ENCODE measurements at regions of chr22 and their contacts with region 1.

Region 1: DNA sequence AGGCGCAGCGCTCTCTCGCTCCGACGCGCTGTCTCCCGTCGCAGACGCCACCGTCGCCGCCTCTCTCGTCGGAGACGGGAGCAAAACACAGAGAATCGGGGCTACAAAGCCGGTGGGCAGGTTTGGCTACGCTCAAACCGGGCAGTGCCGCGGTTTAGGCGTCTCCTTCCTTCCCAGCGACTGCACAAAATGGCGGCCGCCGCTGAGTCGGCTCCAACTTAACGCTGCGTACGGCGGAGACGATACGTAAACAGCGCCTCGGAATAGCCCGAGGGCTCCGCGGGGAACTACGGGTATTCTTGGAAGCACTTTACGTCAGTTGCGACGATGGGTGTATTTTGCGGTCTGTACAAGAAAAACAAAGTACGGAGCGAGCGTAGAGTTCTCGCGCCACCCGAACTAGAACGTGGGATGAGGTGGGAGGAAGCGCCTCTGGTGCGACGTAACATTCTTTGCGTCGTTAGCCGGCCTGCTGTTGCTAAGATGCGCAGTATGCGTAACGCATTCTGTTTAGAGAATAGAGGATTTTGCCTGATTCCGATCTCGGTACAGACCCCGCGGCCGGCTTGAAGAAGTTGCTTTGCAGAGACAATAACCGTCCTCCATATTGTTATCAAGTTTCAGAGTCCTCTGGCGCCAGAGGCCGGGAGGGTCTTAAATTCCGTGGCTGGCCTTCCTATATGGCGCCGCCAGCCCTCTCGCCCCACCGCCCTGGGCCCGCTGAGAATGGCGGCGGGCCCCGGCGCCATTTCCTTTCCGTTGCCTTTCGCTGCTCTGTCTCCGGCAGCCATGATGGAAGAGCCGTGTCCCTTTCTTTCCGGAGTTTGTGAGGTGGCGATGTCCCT is at the start of gene DDX17:
- DNase-seq: peak; percentile 95
- ATAC-seq: peak; percentile 89
- H3K4me3 Mint-ChIP-seq: peak within 1 kb of the TSS; percentile 89
- H3K27ac Mint-ChIP-seq: peak within 1 kb of the TSS; percentile 100
- H3K4me1 Mint-ChIP-seq: peaks cover 36% of the 10 kb centered on the region
- H3K27me3 Mint-ChIP-seq: no peaks in the 10 kb centered on the region
- total RNA-seq, gene DDX17: 259 to 328 TPM

Region 2: DNA sequence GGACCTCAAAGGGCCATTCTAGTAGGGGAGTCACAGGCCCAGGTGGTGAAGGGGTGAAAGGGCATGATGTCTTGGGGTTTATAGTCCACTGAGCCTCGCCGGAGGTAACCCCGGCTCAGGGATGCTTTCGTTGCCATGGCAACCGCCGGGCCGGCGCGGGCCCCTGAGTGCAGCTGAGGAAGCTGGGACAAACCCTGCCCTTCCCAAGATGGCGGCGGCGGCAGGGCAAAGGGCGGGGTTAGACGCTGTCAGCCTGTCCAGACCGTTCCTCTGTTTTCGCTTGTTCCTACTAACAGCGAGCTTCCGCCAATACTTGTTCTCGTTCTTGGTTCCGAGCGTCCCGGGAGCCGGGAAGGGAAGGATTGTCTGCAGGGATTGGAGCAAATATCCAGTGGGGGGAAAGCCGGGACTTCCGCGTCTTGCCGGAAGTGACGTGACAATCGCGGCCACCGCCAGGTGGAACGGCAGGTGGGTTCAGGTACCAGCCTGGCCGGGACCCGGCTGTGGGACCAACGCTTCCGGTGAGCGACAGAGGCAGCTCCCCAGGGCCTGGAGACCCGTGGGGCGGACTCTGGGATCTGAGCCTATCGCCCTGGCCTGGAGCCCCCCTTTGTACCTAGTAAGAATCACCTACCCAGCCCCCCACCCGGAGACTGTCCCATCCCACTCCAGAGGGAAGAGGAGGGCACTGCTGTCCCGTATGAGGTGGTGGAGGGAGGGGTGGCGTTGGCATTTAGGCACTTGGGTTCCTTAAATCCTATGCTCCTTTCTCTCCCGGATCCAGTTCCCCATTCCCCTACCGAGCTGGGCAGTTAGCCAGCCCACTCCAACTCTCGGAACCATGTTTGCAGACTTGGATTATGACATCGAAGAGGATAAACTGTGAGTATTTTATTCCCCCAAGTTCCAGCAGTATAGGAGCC is 449.1 kb before region 1 on chr22 and contains the start of gene PICK1:
- CTCF ChIA-PET with region 1: interaction called, 5 read pairs
- POLR2A ChIA-PET with region 1: no interaction called
- intact Hi-C with region 1: loop called in 1 of 2 experiments (anchors 2 kb)
- DNase-seq: peak; percentile 92
- ATAC-seq: peak; percentile 93
- H3K4me3 Mint-ChIP-seq: peak within 1 kb of the TSS; percentile 88
- H3K27ac Mint-ChIP-seq: peak within 1 kb of the TSS; percentile 98
- H3K4me1 Mint-ChIP-seq: peaks cover 15% of the 10 kb centered on the region
- H3K27me3 Mint-ChIP-seq: no peaks in the 10 kb centered on the region
- total RNA-seq, gene PICK1: 14.9 to 17.2 TPM

Region 3: GRCh38 chr22:38317122-38317994 is 189.0 kb before region 1 on chr22 and contains the start of gene CSNK1E:
- CTCF ChIA-PET with region 1: no interaction called
- POLR2A ChIA-PET with region 1: no interaction called
- intact Hi-C with region 1: loop called in 1 of 2 experiments (anchors 5 kb)
- DNase-seq: peak; percentile 84
- ATAC-seq: peak; percentile 63
- H3K4me3 Mint-ChIP-seq: peak within 1 kb of the TSS; percentile 90
- H3K27ac Mint-ChIP-seq: peak within 1 kb of the TSS; percentile 94
- H3K4me1 Mint-ChIP-seq: peaks cover 41% of the 10 kb centered on the region
- H3K27me3 Mint-ChIP-seq: no peaks in the 10 kb centered on the region
- total RNA-seq, gene CSNK1E: 117 to 145 TPM

Region 4: GRCh38 chr22:38398609-38399461 is 107.5 kb before region 1 on chr22:
- CTCF ChIA-PET with region 1: no interaction called
- POLR2A ChIA-PET with region 1: no interaction called
- intact Hi-C with region 1: loop called (anchors 1 to 5 kb)
- DNase-seq: peak; percentile 92
- ATAC-seq: peak; percentile 67
- H3K4me3 Mint-ChIP-seq: peak overlapping the region; percentile 72
- H3K27ac Mint-ChIP-seq: peak overlapping the region; percentile 47
- H3K4me1 Mint-ChIP-seq: peaks cover 38% of the 10 kb centered on the region
- H3K27me3 Mint-ChIP-seq: no peaks in the 10 kb centered on the region

Region 5: DNA sequence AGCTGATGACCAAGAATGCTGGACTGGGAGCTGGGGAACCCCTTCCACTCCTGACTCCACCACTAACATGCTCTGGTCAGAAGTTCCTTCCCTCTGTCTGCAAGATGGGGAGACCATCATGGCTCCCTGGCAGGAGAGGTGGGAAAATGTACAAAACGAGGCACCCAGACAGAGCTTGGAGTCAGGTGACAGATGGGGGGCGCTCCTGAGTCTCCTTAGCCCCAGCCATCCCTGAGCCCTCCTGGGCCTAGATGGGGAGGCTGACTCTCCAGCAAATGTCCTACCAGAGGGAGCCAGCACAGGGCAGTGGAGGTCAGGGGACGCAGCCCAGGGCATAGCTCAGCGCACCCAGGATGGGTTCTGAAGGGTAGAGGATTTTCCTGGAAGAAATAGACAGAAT is 71.3 kb before region 1 on chr22:
- CTCF ChIA-PET with region 1: no interaction called
- POLR2A ChIA-PET with region 1: no interaction called
- intact Hi-C with region 1: no loop called
- DNase-seq: peak; percentile 25
- ATAC-seq: no peak
- H3K4me3 Mint-ChIP-seq: no peak overlapping the region
- H3K27ac Mint-ChIP-seq: no peak overlapping the region
- H3K4me1 Mint-ChIP-seq: no peaks in the 10 kb centered on the region
- H3K27me3 Mint-ChIP-seq: no peaks in the 10 kb centered on the region

Region 6: DNA sequence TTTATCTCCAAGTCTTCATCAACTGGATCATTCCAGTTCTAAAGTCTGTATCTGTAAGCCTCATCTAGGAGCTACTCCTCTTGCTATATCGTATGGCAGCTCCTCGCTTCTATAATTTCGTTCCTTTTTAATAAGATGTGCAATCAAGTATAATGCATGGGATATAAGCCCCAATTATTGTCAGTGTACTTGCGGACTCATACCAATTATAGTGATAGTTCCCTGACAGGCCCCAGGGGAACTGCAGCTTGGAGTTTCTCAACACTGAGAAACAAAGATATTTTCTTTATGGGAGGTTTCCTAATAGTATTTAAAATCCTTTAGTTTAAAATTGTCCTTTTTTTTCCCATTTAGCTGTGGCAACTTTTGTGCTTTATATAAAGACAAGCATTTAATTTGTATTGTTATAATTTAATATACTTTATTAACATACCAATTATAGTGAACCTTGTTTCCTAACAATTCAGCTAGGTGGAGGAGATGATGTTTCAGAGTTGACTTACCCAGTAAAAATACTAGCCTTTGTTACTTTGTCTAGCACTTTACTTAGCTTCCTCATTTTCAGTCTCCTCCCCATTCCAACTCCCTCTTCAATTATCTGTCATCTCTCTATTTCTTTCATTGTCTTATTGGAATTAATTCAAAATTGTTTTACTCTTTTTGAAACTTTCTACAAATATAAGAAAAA is 25.1 kb after region 1 on chr22:
- CTCF ChIA-PET with region 1: no interaction called
- POLR2A ChIA-PET with region 1: no interaction called
- intact Hi-C with region 1: loop called in 1 of 2 experiments (anchors 1 kb)
- DNase-seq: no peak
- ATAC-seq: peak; percentile 43
- H3K4me3 Mint-ChIP-seq: peak overlapping the region; percentile 48
- H3K27ac Mint-ChIP-seq: peak overlapping the region; percentile 91
- H3K4me1 Mint-ChIP-seq: peaks cover 16% of the 10 kb centered on the region
- H3K27me3 Mint-ChIP-seq: no peaks in the 10 kb centered on the region

Region 7: DNA sequence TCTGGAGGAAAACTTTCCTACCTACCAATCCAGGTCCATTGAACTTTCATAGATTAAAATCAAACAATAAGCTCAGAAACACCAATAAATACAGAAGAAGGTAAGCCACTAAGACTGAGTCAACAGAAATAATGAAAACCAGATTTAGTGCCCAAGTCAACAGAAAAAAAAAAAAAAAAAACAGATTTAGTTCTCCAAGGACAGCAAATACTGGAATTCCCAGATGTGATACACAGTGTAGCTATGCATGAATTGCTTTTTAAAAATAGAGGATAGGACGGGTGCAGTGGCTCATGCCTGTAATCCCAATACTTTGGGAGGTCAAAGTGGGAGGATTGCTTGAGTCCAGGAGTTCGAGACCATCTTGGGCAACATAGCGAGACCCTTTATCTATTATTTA is 47.9 kb after region 1 on chr22:
- CTCF ChIA-PET with region 1: no interaction called
- POLR2A ChIA-PET with region 1: no interaction called
- intact Hi-C with region 1: no loop called
- DNase-seq: no peak
- ATAC-seq: no peak
- H3K4me3 Mint-ChIP-seq: no peak overlapping the region
- H3K27ac Mint-ChIP-seq: no peak overlapping the region
- H3K4me1 Mint-ChIP-seq: no peaks in the 10 kb centered on the region
- H3K27me3 Mint-ChIP-seq: no peaks in the 10 kb centered on the region

Region 8: GRCh38 chr22:38656256-38657044 is 150.1 kb after region 1 on chr22 and contains the starts of genes CBY1 and FAM227A:
- CTCF ChIA-PET with region 1: no interaction called
- POLR2A ChIA-PET with region 1: no interaction called
- intact Hi-C with region 1: loop called in 1 of 2 experiments (anchors 1 kb)
- DNase-seq: peak; percentile 89
- ATAC-seq: peak; percentile 83
- H3K4me3 Mint-ChIP-seq: peak within 1 kb of the TSS; percentile 79
- H3K27ac Mint-ChIP-seq: peak within 1 kb of the TSS; percentile 93
- H3K4me1 Mint-ChIP-seq: peaks cover 11% of the 10 kb centered on the region
- H3K27me3 Mint-ChIP-seq: no peaks in the 10 kb centered on the region
- total RNA-seq, gene CBY1: 9.8 to 11.6 TPM
- total RNA-seq, gene FAM227A: 0.30 to 0.63 TPM

Region 9: GRCh38 chr22:38681784-38682335 is 175.5 kb after region 1 on chr22 and contains the start of gene TOMM22:
- CTCF ChIA-PET with region 1: interaction called, 6 read pairs
- POLR2A ChIA-PET with region 1: no interaction called
- intact Hi-C with region 1: loop called in 1 of 2 experiments (anchors 5 kb)
- DNase-seq: peak; percentile 92
- ATAC-seq: peak; percentile 98
- H3K4me3 Mint-ChIP-seq: peak within 1 kb of the TSS; percentile 90
- H3K27ac Mint-ChIP-seq: peak within 1 kb of the TSS; percentile 98
- H3K4me1 Mint-ChIP-seq: peaks cover 20% of the 10 kb centered on the region
- H3K27me3 Mint-ChIP-seq: no peaks in the 10 kb centered on the region
- total RNA-seq, gene TOMM22: 146 to 155 TPM